Vagina (tissue), 2 donors: ENCODE measurements at regions of chr1 and their contacts with region 1.

Region 1: DNA sequence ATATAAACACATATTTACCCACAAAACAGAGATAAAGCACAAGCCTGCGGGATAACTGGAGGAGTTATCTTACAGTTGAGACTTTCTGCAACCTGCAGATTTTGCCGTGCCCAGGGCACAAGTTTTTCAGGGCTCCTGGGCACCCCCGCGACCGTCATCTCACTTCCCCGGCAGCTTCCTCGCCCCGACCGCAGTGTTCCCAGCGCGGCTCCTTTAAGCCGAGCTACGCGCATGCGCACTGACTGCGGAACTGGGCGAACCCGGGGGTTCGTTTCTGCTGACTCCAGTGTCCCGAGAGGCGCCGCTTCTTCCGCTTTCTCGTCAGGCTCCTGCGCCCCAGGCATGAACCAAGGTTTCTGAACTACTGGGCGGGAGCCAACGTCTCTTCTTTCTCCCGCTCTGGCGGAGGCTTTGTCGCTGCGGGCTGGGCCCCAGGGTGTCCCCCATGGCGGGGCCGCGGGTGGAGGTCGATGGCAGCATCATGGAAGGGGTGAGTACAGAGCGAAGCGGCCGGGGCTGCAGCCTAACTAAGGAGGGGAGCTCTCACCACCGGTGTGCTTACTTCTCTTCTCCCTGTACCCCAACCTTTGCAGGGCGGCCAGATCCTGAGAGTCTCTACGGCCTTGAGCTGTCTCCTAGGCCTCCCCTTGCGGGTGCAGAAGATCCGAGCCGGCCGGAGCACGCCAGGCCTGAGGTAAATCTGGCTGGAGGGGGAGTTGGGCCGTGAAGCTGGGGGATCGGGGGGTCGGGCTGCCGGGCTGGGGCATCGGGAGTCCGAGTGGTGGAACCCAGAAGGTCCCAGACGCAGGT is at the start of gene RTCA:
- DNase-seq: peak in 1 of 2 donors; percentile 94
- H3K4me3 ChIP-seq: peak within 1 kb of the TSS; percentile 72 to 74
- H3K27ac ChIP-seq: peak within 1 kb of the TSS; percentile 68
- H3K4me1 ChIP-seq: peaks cover 43% of the 10 kb centered on the region
- H3K27me3 ChIP-seq: no peaks in the 10 kb centered on the region
- CTCF ChIP-seq: no peak
- POLR2A ChIP-seq: peak in 1 of 2 donors; percentile 61
- total RNA-seq, gene RTCA: 14.5 TPM

Region 2: GRCh38 chr1:100132566-100133477 is 133.3 kb before region 1 on chr1 and contains the starts of genes SASS6 and TRMT13:
- intact Hi-C with region 1: loop called (anchors 10 kb)
- DNase-seq: peak; percentile 96 to 97
- H3K4me3 ChIP-seq: peak within 1 kb of the TSS; percentile 83 to 86
- H3K27ac ChIP-seq: peak within 1 kb of the TSS; percentile 57
- H3K4me1 ChIP-seq: peaks cover 37% of the 10 kb centered on the region
- H3K27me3 ChIP-seq: no peaks in the 10 kb centered on the region
- CTCF ChIP-seq: peak in 1 of 3 experiments; percentile 21
- POLR2A ChIP-seq: no peak
- total RNA-seq, gene SASS6: 3.4 TPM
- total RNA-seq, gene TRMT13: 14.5 TPM

Region 3: DNA sequence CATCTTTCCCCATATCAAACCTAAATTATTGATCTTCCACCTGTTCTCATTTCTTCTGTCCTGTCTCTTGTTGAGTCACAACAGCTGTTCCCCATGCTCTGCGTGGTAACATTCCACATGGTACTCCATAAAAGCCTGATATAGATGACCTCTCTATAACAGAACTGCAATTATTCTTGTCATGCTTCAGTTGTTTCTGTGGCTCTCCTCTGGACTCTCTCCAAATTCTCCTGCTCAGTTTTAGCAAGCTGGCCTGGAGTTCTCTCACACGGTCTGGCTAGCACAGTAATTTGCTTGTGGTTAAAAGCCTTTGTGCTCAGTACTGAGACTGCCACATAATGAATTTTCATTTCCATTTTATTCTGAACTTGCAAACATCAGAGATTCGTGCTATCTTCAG is 77.5 kb before region 1 on chr1:
- intact Hi-C with region 1: no loop called
- DNase-seq: no peak
- H3K4me3 ChIP-seq: no peak overlapping the region
- H3K27ac ChIP-seq: no peak overlapping the region
- H3K4me1 ChIP-seq: peaks cover 10% of the 10 kb centered on the region
- H3K27me3 ChIP-seq: no peaks in the 10 kb centered on the region
- CTCF ChIP-seq: no peak
- POLR2A ChIP-seq: no peak

Region 4: GRCh38 chr1:100313382-100313781 is 47.2 kb after region 1 on chr1:
- intact Hi-C with region 1: no loop called
- DNase-seq: no peak
- H3K4me3 ChIP-seq: no peak overlapping the region
- H3K27ac ChIP-seq: no peak overlapping the region
- H3K4me1 ChIP-seq: no peaks in the 10 kb centered on the region
- H3K27me3 ChIP-seq: no peaks in the 10 kb centered on the region
- CTCF ChIP-seq: no peak
- POLR2A ChIP-seq: no peak

Region 5: DNA sequence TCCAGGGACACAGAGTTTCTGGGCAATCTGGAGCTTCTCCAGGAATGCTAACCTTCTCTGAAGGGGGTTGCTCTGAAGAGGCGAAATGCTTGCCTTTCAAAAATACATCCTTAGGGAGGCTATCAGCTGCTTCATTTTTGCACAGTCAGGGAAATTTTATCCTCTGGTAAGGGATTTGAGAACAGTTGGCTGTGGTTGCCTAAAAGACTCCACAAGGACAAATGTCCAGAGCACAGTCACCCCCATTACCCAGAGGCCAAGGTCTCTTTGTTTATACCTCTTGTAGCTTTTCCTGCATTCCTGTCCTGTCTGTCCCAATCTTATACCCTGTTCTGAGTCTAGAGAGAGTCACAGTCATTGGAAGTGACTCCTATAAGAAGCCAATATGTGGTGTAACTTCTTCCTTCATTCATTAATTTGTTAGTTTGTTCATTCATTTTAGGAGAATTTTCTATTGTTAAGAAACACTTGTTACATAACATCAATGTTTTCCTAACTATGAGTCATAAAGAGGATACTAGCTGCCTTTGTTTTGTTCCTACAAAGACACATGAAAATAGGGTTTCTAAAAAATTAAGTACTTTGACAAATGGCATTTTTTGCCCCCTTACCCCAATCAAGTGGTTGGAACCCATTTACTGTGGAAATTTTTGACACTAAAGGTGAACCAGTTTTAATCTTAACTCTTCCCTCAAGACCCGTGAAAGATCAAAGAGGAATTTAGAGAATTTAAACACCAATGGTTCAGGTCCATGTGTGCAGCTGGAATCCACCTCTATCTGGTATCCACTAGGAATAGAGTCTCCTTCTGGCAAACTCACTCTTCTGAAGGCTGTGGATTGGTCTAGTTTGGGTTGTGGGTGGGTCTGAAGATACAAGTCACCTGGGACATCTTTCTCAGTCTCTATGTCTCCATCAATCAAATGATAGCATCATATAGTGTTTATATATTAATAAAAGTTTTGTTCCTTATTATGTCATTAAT is 318.9 kb after region 1 on chr1:
- intact Hi-C with region 1: no loop called
- DNase-seq: no peak
- H3K4me3 ChIP-seq: no peak overlapping the region
- H3K27ac ChIP-seq: no peak overlapping the region
- H3K4me1 ChIP-seq: no peaks in the 10 kb centered on the region
- H3K27me3 ChIP-seq: no peaks in the 10 kb centered on the region
- CTCF ChIP-seq: no peak
- POLR2A ChIP-seq: no peak

Region 6: GRCh38 chr1:101632548-101633256 is 1366.6 kb after region 1 on chr1:
- intact Hi-C with region 1: no loop called
- DNase-seq: no peak
- H3K4me3 ChIP-seq: no peak overlapping the region
- H3K27ac ChIP-seq: no peak overlapping the region
- H3K4me1 ChIP-seq: no peaks in the 10 kb centered on the region
- H3K27me3 ChIP-seq: no peaks in the 10 kb centered on the region
- CTCF ChIP-seq: no peak
- POLR2A ChIP-seq: no peak